PC-3 (cell line): ENCODE measurements at regions of chr6 and their contacts with region 1.

Region 1: GRCh38 chr6:43436577-43437282 is 9.4 kb downstream of the ABCC10 start:
- DNase-seq: peak; percentile 77
- ATAC-seq: peak; percentile 89
- H3K4me3 ChIP-seq: no peak overlapping the region
- H3K27ac ChIP-seq: peak overlapping the region; percentile 23
- H3K4me1 ChIP-seq: peaks cover 19% of the 10 kb centered on the region
- H3K27me3 ChIP-seq: no peaks in the 10 kb centered on the region
- CTCF ChIP-seq: no peak

Region 2: GRCh38 chr6:43263314-43264178 is 173.2 kb before region 1 on chr6:
- CTCF ChIA-PET with region 1: no interaction called
- POLR2A ChIA-PET with region 1: no interaction called
- intact Hi-C with region 1: no loop called
- DNase-seq: peak; percentile 77
- ATAC-seq: peak; percentile 99
- H3K4me3 ChIP-seq: no peak overlapping the region
- H3K27ac ChIP-seq: no peak overlapping the region
- H3K4me1 ChIP-seq: no peaks in the 10 kb centered on the region
- H3K27me3 ChIP-seq: no peaks in the 10 kb centered on the region
- CTCF ChIP-seq: peak; percentile 95

Region 3: DNA sequence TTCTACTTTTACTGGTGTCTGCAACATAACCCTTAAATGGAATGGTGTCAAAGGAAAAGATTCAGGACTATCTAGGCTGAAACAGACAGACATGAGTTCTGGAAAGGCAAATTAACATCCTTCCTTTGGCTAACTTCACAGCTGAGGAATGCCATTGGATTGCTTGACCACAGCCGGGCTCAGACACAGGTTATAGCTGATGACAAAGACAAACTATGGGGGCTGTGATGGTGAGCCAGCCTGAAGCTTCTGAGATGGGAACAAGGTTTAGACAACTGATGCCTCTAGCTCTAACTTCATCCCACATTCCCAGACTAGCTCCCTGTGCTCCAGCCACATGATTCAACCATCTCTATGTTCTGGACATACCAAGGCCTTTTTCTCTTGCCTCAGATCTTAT is 95.5 kb after region 1 on chr6:
- CTCF ChIA-PET with region 1: interaction called, 10 read pairs
- POLR2A ChIA-PET with region 1: no interaction called
- intact Hi-C with region 1: no loop called
- DNase-seq: no peak
- ATAC-seq: no peak
- H3K4me3 ChIP-seq: no peak overlapping the region
- H3K27ac ChIP-seq: no peak overlapping the region
- H3K4me1 ChIP-seq: no peaks in the 10 kb centered on the region
- H3K27me3 ChIP-seq: no peaks in the 10 kb centered on the region
- CTCF ChIP-seq: no peak

Region 4: DNA sequence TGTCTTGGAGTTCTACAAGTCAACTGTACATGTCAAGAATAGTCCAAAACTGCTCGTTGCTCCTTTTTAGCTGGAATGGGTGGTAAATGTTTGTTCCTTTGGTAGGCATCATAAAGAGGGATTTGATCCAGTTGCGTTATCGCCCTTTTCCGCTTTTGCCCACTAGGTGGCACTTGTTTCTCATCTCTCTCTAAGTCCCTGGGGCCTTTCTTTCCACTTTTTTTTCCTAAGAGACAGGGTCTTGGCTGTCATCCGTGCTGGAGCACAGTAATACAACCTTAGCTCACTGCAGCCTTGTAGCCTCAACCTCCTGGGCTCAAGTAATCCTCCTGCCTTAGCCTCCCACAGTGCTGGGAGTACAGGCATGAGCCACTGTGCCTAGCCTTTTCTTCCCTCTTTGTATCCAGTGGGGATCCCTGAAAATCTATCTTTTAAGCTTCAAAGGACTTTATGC is 171.6 kb after region 1 on chr6:
- CTCF ChIA-PET with region 1: no interaction called
- POLR2A ChIA-PET with region 1: no interaction called
- intact Hi-C with region 1: no loop called
- DNase-seq: peak; percentile 86
- ATAC-seq: peak; percentile 77
- H3K4me3 ChIP-seq: no peak overlapping the region
- H3K27ac ChIP-seq: no peak overlapping the region
- H3K4me1 ChIP-seq: peaks cover 8% of the 10 kb centered on the region; the same call in 1 of the 2 replicates
- H3K27me3 ChIP-seq: no peaks in the 10 kb centered on the region
- CTCF ChIP-seq: peak; percentile 91

Region 5: DNA sequence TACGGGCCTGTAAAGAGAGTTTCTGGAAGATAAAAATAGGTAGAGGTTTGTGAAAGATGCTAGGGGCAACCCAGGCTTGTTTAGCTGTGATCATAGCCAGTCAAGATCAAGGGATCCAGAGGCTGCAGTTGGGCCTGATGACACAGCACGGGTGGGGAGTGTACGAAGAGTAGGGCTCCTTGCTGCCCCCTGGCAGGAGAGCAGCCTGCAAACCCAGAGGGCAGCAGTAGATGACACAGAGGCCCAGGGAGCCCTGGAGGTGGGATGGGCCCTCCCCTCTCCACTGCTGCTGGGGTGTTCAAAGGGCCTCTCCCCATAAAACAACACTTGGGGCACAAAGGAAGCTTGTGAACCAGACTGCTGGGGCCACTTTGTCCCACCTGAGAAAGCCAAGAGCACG is 380.5 kb after region 1 on chr6:
- CTCF ChIA-PET with region 1: no interaction called
- POLR2A ChIA-PET with region 1: no interaction called
- intact Hi-C with region 1: no loop called
- DNase-seq: peak; percentile 55
- ATAC-seq: peak; percentile 89
- H3K4me3 ChIP-seq: no peak overlapping the region
- H3K27ac ChIP-seq: no peak overlapping the region
- H3K4me1 ChIP-seq: no peaks in the 10 kb centered on the region
- H3K27me3 ChIP-seq: no peaks in the 10 kb centered on the region
- CTCF ChIP-seq: peak; percentile 61